Activated B cell treated with CpG ODN at 0.5 μM for 24 hours (primary cell): ENCODE measurements at regions of chr19 and their contacts with region 1.

Region 1: GRCh38 chr19:8158411-8159074 is 9.2 kb upstream of the FBN3 start:
- DNase-seq: no peak
- ATAC-seq: peak; percentile 65
- H3K4me3 Mint-ChIP-seq: no peak overlapping the region
- H3K27ac Mint-ChIP-seq: peak overlapping the region; percentile 61
- H3K4me1 Mint-ChIP-seq: peaks cover 23% of the 10 kb centered on the region
- H3K27me3 Mint-ChIP-seq: peaks cover 10% of the 10 kb centered on the region
- CTCF ChIP-seq: no peak

Region 2: GRCh38 chr19:7562646-7563393 is 595.7 kb before region 1 on chr19:
- CTCF ChIA-PET with region 1: no interaction called
- POLR2A ChIA-PET with region 1: no interaction called
- intact Hi-C with region 1: loop called (anchors 2 kb)
- DNase-seq: no peak
- ATAC-seq: no peak
- H3K4me3 Mint-ChIP-seq: no peak overlapping the region
- H3K27ac Mint-ChIP-seq: no peak overlapping the region
- H3K4me1 Mint-ChIP-seq: no peaks in the 10 kb centered on the region
- H3K27me3 Mint-ChIP-seq: no peaks in the 10 kb centered on the region
- CTCF ChIP-seq: no peak

Region 3: DNA sequence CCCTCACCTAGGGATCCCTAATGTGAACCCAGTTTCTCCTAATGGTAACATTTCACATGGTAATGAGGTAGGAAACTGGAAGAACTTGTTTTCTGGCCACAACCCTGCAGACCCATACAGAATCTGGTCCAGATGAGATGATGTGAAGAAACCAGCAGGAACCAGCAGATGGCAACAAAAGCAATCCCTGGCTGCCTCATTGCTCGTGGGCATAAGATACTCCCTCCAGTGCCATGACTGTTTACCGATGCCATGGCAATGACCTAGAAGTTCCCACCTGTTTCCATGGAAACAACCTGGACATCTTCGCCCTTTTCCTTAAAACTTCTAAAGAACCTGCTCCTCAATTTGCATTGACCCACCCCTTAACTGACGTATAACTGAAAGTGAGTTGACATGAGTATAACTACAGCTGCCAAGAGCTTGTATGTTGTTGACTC is 409.8 kb before region 1 on chr19:
- CTCF ChIA-PET with region 1: no interaction called
- POLR2A ChIA-PET with region 1: no interaction called
- intact Hi-C with region 1: no loop called
- DNase-seq: no peak
- ATAC-seq: no peak
- H3K4me3 Mint-ChIP-seq: no peak overlapping the region
- H3K27ac Mint-ChIP-seq: no peak overlapping the region
- H3K4me1 Mint-ChIP-seq: peaks cover 70% of the 10 kb centered on the region
- H3K27me3 Mint-ChIP-seq: no peaks in the 10 kb centered on the region
- CTCF ChIP-seq: no peak

Region 4: GRCh38 chr19:8017808-8018207 is 140.7 kb before region 1 on chr19:
- CTCF ChIA-PET with region 1: no interaction called
- POLR2A ChIA-PET with region 1: no interaction called
- intact Hi-C with region 1: loop called (anchors 2 kb)
- DNase-seq: peak; percentile 25
- ATAC-seq: peak; percentile 100
- H3K4me3 Mint-ChIP-seq: no peak overlapping the region
- H3K27ac Mint-ChIP-seq: peak overlapping the region; percentile 19
- H3K4me1 Mint-ChIP-seq: peaks cover 13% of the 10 kb centered on the region
- H3K27me3 Mint-ChIP-seq: no peaks in the 10 kb centered on the region
- CTCF ChIP-seq: no peak

Region 5: DNA sequence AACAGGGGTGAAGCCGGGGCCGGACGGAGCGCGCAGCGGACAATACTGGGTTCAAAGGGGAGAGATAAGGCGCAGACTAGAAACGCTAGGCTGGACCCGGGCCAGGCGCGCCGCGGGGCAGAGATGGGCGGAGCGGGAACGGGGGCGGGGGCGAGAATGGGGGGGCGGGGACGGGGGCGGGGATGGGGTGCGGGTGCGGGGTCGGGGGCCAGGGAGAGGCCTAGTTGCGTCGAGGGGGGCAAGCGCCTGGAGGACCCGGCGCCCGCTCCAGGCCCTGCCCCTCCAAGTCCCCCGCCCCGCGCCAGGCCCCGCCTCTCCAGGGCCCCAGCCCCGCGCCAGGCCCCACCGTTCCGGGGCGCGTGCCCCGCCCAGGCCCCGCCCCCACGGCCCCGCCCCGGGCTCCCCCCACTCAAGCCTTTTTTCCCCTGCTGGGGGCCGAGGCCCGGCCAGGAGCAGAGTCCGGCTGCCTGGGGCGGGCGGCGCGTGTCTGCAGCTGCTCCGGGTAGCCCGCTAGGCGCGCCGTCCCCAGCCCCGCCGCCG is 50.4 kb after region 1 on chr19 and contains the start of gene CERS4:
- CTCF ChIA-PET with region 1: interaction called, 7 read pairs
- POLR2A ChIA-PET with region 1: interaction called, 29 read pairs
- intact Hi-C with region 1: loop called (anchors 1 kb)
- DNase-seq: peak; percentile 81
- ATAC-seq: peak; percentile 86
- H3K4me3 Mint-ChIP-seq: peak within 1 kb of the TSS; percentile 96
- H3K27ac Mint-ChIP-seq: peak within 1 kb of the TSS; percentile 81
- H3K4me1 Mint-ChIP-seq: peaks cover 53% of the 10 kb centered on the region
- H3K27me3 Mint-ChIP-seq: no peaks in the 10 kb centered on the region
- CTCF ChIP-seq: no peak
- total RNA-seq, gene CERS4: 112 and 114 TPM in 2 replicates

Region 6: DNA sequence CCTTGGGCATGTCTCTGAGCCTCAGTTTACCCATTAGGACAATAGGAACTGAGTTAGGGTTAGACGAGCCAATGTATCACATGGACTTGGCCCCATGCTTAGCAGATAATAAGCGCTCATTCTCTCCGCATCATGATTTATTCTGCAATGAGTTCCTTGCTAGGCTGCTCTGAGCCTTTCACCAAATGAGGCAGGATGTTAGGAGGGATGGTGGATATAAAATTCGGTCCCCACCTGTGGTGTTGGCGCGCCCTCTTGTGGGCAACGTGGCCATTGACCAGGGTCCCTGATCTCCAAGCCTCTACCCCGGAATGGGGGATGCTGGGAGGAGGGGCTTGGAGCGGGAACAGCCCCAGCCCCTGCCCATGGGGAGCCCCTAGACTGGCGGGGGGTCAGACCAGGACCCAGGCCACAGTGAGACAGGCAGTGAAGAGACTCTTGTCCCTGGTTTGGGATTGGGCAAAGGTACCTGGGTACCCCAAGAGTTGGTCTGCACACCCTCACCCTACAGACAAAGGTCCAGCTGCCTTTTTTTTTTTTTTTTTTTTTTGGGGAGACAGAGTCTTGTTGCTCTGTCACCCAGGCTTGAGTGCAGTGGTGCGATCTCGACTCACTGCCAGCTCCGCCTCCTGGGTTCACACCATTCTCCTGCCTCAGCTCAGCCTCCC is 94.5 kb after region 1 on chr19:
- CTCF ChIA-PET with region 1: interaction called, 46 read pairs
- POLR2A ChIA-PET with region 1: interaction called, 6 read pairs
- intact Hi-C with region 1: loop called (anchors 1 kb)
- DNase-seq: peak; percentile 82
- ATAC-seq: peak; percentile 95
- H3K4me3 Mint-ChIP-seq: no peak overlapping the region
- H3K27ac Mint-ChIP-seq: peak overlapping the region; percentile 71
- H3K4me1 Mint-ChIP-seq: peaks cover 3% of the 10 kb centered on the region
- H3K27me3 Mint-ChIP-seq: no peaks in the 10 kb centered on the region
- CTCF ChIP-seq: peak; percentile 75

Region 7: GRCh38 chr19:8396563-8397203 is 238.1 kb after region 1 on chr19:
- CTCF ChIA-PET with region 1: no interaction called
- POLR2A ChIA-PET with region 1: no interaction called
- intact Hi-C with region 1: loop called (anchors 1 kb)
- DNase-seq: peak; percentile 46
- ATAC-seq: peak; percentile 96
- H3K4me3 Mint-ChIP-seq: no peak overlapping the region
- H3K27ac Mint-ChIP-seq: peak overlapping the region; percentile 50
- H3K4me1 Mint-ChIP-seq: peaks cover 27% of the 10 kb centered on the region
- H3K27me3 Mint-ChIP-seq: no peaks in the 10 kb centered on the region
- CTCF ChIP-seq: no peak